ENCODE measurements at regions of chr7 and their contacts with region 1.

Region 1: DNA sequence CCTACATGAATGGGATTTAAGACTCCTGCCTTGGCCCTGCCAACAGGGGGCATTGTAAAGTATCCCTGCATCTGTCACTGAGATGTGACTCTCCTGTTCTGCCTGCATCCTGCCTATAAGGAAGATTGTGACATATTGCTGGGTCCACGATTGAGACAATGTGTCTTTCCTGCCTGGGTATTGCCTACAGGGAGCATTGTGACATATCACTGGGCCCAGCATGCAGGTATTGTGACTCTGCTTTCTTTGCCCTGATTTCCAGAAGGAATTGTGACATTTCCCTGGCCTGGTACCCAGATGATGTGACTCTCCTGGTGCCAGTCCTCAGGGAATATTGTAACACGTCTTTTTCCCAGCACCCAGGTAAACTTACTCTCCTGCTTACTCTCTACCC is 14.2 kb upstream of the ZNF107 start:
- DNase-seq: no peak
- ATAC-seq: no peak
- H3K4me3 ChIP-seq: no peak overlapping the region
- H3K27ac ChIP-seq: no peak overlapping the region
- H3K4me1 ChIP-seq: no peaks in the 10 kb centered on the region
- H3K27me3 ChIP-seq: no peaks in the 10 kb centered on the region
- CTCF ChIP-seq: 0 out of 2 replicates have a peak, but pooled peaks have one; percentile 20

Region 2: GRCh38 chr7:64672414-64672813 is 20.6 kb after region 1 on chr7:
- CTCF ChIA-PET with region 1: interaction called, 10 read pairs
- POLR2A ChIA-PET with region 1: no interaction called
- in situ Hi-C with region 1: no loop called
- intact Hi-C with region 1: no loop called
- DNase-seq: no peak
- ATAC-seq: no peak
- H3K4me3 ChIP-seq: no peak overlapping the region
- H3K27ac ChIP-seq: no peak overlapping the region
- H3K4me1 ChIP-seq: peaks cover 4% of the 10 kb centered on the region; the same call in 1 of the 2 replicates
- H3K27me3 ChIP-seq: no peaks in the 10 kb centered on the region
- CTCF ChIP-seq: no peak

Region 3: GRCh38 chr7:66642186-66642585 is 1990.4 kb after region 1 on chr7:
- CTCF ChIA-PET with region 1: no interaction called
- POLR2A ChIA-PET with region 1: no interaction called
- in situ Hi-C with region 1: no loop called
- intact Hi-C with region 1: no loop called
- DNase-seq: no peak
- ATAC-seq: no peak
- H3K4me3 ChIP-seq: no peak overlapping the region
- H3K27ac ChIP-seq: no peak overlapping the region
- H3K4me1 ChIP-seq: no peaks in the 10 kb centered on the region
- H3K27me3 ChIP-seq: no peaks in the 10 kb centered on the region
- CTCF ChIP-seq: no peak